Heart left ventricle (tissue), 16 donors: ENCODE measurements at regions of chr19 and their contacts with region 1.

Region 1: GRCh38 chr19:18940769-18941407 is at the start of gene HOMER3:
- DNase-seq: peak; percentile 80 to 92 (median 88)
- ATAC-seq: peak; percentile 53 to 91 (median 86)
- H3K4me3 ChIP-seq: peak within 1 kb of the TSS; percentile 56 to 90 (median 76)
- H3K27ac ChIP-seq: peak within 1 kb of the TSS in 10 of 12 donors; percentile 50 to 78 (median 65)
- H3K4me1 ChIP-seq: peaks cover 0 to 23% (median 7%) of the 10 kb centered on the region in 12 donors
- H3K27me3 ChIP-seq: no peaks in the 10 kb centered on the region
- CTCF ChIP-seq: peak in 6 of 12 donors; percentile 29 to 47 (median 32)
- POLR2A ChIP-seq: no peak
- total RNA-seq, gene HOMER3: 13.6 to 36.8 (median 16.4) TPM

Region 2: GRCh38 chr19:18919086-18919899 is 21.6 kb before region 1 on chr19 and contains the starts of genes COPE and DDX49:
- intact Hi-C with region 1: loop called in 1 of 10 experiments (anchors 2 kb)
- DNase-seq: peak; percentile 96 to 99 (median 99)
- ATAC-seq: peak; percentile 98 to 99 (median 99)
- H3K4me3 ChIP-seq: peak within 1 kb of the TSS; percentile 62 to 100 (median 88)
- H3K27ac ChIP-seq: peak within 1 kb of the TSS; percentile 73 to 92 (median 89)
- H3K4me1 ChIP-seq: peaks cover 6 to 47% (median 25%) of the 10 kb centered on the region in 12 donors
- H3K27me3 ChIP-seq: no peaks in the 10 kb centered on the region
- CTCF ChIP-seq: peak in 2 of 12 donors; percentile 15 to 17
- POLR2A ChIP-seq: peak in 1 of 2 donors; percentile 80
- total RNA-seq, gene COPE: 94.0 to 241 (median 123) TPM
- total RNA-seq, gene DDX49: 14.3 to 49.9 (median 25.9) TPM